Ascending aorta (tissue), 2 donors: ENCODE measurements at regions of chr2 and their contacts with region 1.

Region 1: DNA sequence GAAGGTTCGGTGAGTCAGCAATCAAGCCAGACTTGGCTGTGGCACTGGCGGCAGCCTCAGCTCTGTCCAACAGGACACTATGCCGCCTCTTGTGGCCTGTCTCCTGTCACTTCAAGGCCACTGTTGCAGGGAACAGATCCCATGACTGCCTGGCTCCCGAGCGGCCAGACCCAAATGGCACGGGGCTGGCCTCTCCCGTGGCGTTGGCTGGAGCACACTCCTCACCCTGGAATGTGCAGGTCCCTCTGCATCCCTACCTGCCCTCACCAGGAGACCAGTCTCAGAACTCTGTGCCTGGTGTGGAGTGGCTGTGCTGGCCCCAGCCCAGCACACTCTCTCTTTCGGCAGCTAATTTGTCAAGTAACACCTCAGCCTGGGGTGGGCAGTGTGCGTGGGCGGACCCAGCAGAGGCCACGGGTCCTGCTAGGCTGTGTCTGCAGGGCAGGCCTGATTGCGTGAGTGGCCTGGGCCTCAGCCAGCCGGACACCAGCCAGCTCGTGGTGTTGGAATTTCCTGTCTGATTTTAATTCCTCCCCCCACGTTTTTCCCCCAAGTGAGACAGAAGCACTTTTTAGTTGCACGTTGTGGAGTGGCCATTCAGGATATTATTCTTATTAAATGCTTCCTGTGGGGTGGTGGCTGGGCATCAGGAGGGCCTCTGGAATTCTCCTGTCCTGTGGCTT is 179.3 kb downstream of the GLI2 start:
- DNase-seq: peak; percentile 77 to 95
- H3K4me3 ChIP-seq: peak overlapping the region in 1 of 2 donors; percentile 22
- H3K27ac ChIP-seq: peak overlapping the region; percentile 84 to 90
- H3K4me1 ChIP-seq: peaks cover 30 to 51% of the 10 kb centered on the region in 2 donors
- H3K27me3 ChIP-seq: no peaks in the 10 kb centered on the region
- CTCF ChIP-seq: peak in 2 of 3 experiments; percentile 22 to 45

Region 2: GRCh38 chr2:120539937-120540718 is 374.9 kb before region 1 on chr2:
- intact Hi-C with region 1: loop called (anchors 5 kb)
- DNase-seq: peak; percentile 59 to 96
- H3K4me3 ChIP-seq: peak overlapping the region in 1 of 2 donors; percentile 2
- H3K27ac ChIP-seq: peak overlapping the region; percentile 9 to 43
- H3K4me1 ChIP-seq: peaks cover 10 to 19% of the 10 kb centered on the region in 2 donors
- H3K27me3 ChIP-seq: no peaks in the 10 kb centered on the region
- CTCF ChIP-seq: no peak

Region 3: GRCh38 chr2:120892967-120893667 is 21.9 kb before region 1 on chr2:
- intact Hi-C with region 1: loop called (anchors 2 kb)
- DNase-seq: no peak
- H3K4me3 ChIP-seq: peak overlapping the region in 1 of 2 donors; percentile 18
- H3K27ac ChIP-seq: peak overlapping the region; percentile 70 to 79
- H3K4me1 ChIP-seq: peaks cover 0 to 22% of the 10 kb centered on the region in 2 donors
- H3K27me3 ChIP-seq: no peaks in the 10 kb centered on the region
- CTCF ChIP-seq: no peak

Region 4: DNA sequence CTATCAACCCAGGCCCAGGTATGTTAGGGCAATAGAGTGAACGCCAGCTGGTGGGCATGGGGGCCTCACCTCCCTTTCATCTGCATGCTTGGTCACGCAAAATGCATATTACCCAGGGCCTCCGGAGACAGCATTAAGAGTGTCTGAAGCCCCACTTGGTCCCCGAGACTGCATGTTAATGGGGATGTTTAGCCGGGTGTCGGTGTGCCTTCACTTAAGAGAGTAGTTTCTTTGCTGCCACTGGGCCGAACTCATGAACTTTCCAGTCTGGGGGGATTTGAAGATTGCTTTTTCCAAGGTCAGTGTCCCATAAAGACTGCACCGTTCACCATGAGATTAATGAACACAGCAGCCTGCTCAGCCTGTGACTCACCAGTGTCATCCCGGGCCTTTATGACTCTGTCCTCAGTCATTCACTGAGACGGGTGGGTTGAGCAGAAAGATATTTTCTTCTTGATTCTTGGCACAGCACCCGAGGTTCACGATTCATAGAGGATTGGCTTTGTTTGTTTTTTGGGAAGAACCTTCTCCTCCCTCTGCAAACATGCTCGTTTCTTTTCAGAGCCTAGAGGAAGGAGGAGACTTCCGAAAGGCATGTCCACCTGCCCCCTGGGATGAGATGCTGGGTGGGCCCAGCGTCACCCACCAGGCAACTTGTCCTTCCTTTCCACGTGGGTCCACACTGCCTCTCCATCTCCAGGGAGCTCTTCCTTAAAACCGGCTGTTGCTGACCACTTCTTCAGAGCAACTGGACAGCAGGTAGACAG is 19.8 kb after region 1 on chr2:
- intact Hi-C with region 1: loop called (anchors 1 kb)
- DNase-seq: peak in 1 of 2 donors; percentile 76
- H3K4me3 ChIP-seq: no peak overlapping the region
- H3K27ac ChIP-seq: peak overlapping the region; percentile 52 to 76
- H3K4me1 ChIP-seq: peaks cover 24 to 54% of the 10 kb centered on the region in 2 donors
- H3K27me3 ChIP-seq: no peaks in the 10 kb centered on the region
- CTCF ChIP-seq: no peak

Region 5: GRCh38 chr2:120939595-120940318 is 24.8 kb after region 1 on chr2:
- intact Hi-C with region 1: loop called (anchors 1 kb)
- DNase-seq: no peak
- H3K4me3 ChIP-seq: no peak overlapping the region
- H3K27ac ChIP-seq: no peak overlapping the region
- H3K4me1 ChIP-seq: peaks cover 27 to 51% of the 10 kb centered on the region in 2 donors
- H3K27me3 ChIP-seq: no peaks in the 10 kb centered on the region
- CTCF ChIP-seq: no peak

Region 6: GRCh38 chr2:120983344-120983743 is 68.4 kb after region 1 on chr2:
- intact Hi-C with region 1: no loop called
- DNase-seq: no peak
- H3K4me3 ChIP-seq: no peak overlapping the region
- H3K27ac ChIP-seq: no peak overlapping the region
- H3K4me1 ChIP-seq: no peaks in the 10 kb centered on the region
- H3K27me3 ChIP-seq: no peaks in the 10 kb centered on the region
- CTCF ChIP-seq: no peak